ENCODE measurements at regions of chr6 and their contacts with region 1.

Region 1: DNA sequence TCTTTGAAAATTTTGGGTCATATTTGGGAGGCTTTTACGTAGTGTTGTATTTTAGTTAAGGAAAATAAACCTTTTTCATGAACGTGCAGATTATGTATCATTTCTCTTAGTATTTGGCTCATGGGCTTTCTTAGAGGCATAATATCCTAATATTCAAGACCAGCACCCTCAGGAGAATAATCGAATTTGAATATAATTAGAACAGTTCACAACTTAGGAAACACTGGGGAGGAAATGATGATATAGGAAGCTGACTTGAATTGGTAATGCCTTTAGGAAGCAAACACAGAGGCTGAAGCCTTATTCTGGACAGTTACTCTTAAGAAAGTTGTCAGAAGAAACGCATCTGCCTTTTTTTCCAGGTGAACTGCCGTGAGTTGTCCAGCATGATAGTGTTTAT is at the start of gene GFRAL:
- DNase-seq: no peak
- ATAC-seq: no peak
- H3K4me3 Mint-ChIP-seq: no peak within 1 kb of the TSS
- H3K27ac Mint-ChIP-seq: no peak within 1 kb of the TSS
- H3K4me1 Mint-ChIP-seq: no peaks in the 10 kb centered on the region
- H3K27me3 Mint-ChIP-seq: no peaks in the 10 kb centered on the region
- CTCF ChIP-seq: no peak
- total RNA-seq, gene GFRAL: not detected in 2 replicates

Region 2: DNA sequence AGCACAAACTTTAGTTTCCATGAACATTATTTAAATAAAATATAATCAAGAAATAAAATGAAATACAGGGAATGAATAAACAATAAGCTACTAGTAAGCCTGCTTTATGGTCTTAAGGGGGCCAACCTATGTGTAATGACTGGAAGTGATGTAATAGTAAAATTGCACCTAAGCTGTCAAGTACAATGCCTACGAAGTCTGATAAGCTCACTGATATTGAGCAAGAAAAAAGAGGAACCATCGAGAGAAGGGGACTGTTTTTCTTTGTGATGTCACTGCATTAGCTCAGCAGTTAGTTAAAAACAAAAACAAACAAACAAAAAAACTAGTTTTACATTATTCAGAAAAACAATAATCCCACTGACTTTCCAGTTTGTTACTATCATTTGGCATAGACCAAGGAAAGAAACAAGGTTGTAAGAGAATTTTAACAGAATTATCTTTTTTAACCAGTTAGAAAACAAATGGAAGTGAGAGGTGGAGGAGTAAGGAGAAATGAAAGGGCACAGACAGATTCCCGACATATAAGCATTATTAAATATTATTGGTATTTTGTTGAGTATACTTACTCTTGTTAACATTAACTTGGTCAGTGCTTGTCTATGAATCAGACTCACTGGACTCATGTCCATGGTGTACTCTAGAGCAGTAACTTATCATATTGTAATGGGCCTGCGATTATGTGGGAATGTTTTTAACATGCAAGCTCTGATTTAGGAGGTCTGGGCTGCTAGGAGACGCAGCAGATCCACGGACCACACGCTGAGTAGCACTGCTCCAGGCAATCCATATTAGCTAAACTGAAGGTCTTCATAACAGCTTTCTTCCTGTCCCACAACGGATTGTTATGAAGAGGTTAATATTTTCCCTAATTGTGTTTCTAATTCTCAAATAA is 351.4 kb after region 1 on chr6:
- CTCF ChIA-PET with region 1: no interaction called
- POLR2A ChIA-PET with region 1: no interaction called
- intact Hi-C with region 1: loop called (anchors 10 kb)
- DNase-seq: no peak
- ATAC-seq: no peak
- H3K4me3 Mint-ChIP-seq: no peak overlapping the region
- H3K27ac Mint-ChIP-seq: no peak overlapping the region
- H3K4me1 Mint-ChIP-seq: no peaks in the 10 kb centered on the region
- H3K27me3 Mint-ChIP-seq: no peaks in the 10 kb centered on the region
- CTCF ChIP-seq: no peak

Measured in activated B cell treated with CpG ODN at 0.5 μM for 24 hours (primary cell).